ENCODE measurements at regions of chr13 and their contacts with region 1.

Region 1: GRCh38 chr13:110561344-110562035 is at the start of gene RAB20:
- DNase-seq: peak; percentile 62
- H3K4me3 Mint-ChIP-seq: peak within 1 kb of the TSS; percentile 97
- H3K27ac Mint-ChIP-seq: peak within 1 kb of the TSS; percentile 93
- H3K4me1 Mint-ChIP-seq: peaks cover 41% of the 10 kb centered on the region
- H3K27me3 Mint-ChIP-seq: peaks cover 31% of the 10 kb centered on the region
- total RNA-seq, gene RAB20: 1.1 and 1.5 TPM in 2 replicates

Region 2: GRCh38 chr13:110455941-110456340 is 105.5 kb before region 1 on chr13:
- intact Hi-C with region 1: loop called (anchors 5 kb)
- DNase-seq: peak; percentile 51
- H3K4me3 Mint-ChIP-seq: peak overlapping the region; percentile 7
- H3K27ac Mint-ChIP-seq: no peak overlapping the region
- H3K4me1 Mint-ChIP-seq: peaks cover 6% of the 10 kb centered on the region
- H3K27me3 Mint-ChIP-seq: peaks cover 16% of the 10 kb centered on the region

Region 3: DNA sequence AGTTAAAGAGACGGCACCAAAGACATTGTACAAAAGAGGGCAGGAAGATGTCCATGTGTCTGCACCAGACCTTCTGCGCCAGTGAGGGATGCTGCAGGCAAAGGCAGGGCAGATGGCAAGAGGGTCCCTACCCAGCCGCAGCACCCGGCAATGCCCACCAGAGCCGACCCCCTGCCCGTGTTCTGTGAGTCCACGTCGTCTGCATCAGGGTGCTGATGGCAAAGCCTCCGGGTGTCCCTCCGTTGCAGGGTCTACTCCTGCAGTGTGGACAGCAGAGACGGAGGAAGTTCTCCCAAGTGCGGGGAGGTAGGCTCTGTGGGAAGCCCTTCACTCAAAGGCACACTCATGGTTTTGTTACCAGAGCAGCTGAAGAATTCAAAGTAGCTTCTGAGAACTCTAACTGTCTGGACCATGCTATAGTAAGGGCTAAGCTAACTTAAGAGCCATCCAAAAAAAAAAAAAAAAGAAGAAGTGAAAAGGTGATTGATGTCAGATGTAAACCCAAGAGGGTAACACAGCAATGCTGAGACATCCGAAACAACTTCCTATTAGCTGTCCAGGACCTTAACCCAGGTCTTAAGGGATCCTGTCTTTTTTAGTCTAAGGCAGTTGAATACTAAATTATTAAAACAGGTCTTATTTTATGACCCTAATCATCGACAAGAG is 11.1 kb after region 1 on chr13:
- intact Hi-C with region 1: loop called (anchors 1 kb)
- DNase-seq: no peak
- H3K4me3 Mint-ChIP-seq: no peak overlapping the region
- H3K27ac Mint-ChIP-seq: no peak overlapping the region
- H3K4me1 Mint-ChIP-seq: peaks cover 19% of the 10 kb centered on the region
- H3K27me3 Mint-ChIP-seq: peaks cover 46% of the 10 kb centered on the region

Region 4: DNA sequence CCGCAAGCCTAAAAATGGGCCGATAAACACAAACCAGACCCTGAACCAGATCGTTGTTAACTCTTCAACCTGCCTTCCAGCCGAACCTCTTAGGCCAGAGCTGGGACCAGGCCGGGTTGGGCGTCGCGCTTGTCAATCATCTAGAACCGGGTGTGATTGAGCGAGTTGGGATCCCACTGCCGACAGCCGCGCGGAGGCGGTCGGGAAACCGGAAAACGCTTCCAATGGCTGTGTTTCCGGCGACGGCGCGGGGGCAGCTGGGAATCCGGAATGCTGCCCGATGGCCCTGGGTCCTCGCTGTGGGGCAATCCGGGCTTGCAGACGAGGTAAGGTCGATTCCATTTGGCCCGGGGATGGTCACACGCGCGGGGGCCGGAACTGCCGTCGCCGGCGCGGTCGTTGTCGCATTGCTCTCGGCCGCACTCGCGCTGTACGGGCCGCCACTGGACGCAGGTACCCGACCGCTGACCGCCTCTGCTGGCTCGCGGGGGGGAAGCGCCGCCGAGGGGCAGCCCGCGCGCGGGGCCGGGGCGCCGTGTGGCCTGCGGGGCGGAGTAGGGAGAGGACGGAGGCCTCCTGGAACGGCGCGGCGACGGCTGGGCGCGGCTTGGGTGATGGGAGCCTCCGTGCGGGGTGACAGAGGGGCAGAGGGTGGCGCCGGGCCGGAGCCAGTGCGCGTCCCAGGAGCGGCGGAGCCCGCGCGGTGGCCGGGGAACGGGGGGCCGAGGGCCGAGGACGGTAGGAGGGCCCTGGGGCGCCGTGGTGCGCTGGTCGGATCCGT is 54.0 kb after region 1 on chr13 and contains the start of gene NAXD:
- intact Hi-C with region 1: loop called (anchors 2 kb)
- DNase-seq: peak; percentile 80
- H3K4me3 Mint-ChIP-seq: peak within 1 kb of the TSS; percentile 96
- H3K27ac Mint-ChIP-seq: peak within 1 kb of the TSS; percentile 94
- H3K4me1 Mint-ChIP-seq: peaks cover 24% of the 10 kb centered on the region
- H3K27me3 Mint-ChIP-seq: peaks cover 4% of the 10 kb centered on the region
- total RNA-seq, gene NAXD: 22.0 and 22.2 TPM in 2 replicates

Measured in activated T-helper 1 cell treated with anti-CD3 and anti-CD28 coated beads, Interleukin-12 subunit alpha, Interleukin-12 subunit beta, Interleukin-2, Interleukin-4 antibody, amounts not matched to agents 30 ng/mL and 10 ng/mL and 1 ng/mL, durations not matched to agents 14 hours and 24 hours and 36 hours (primary cell).